ENCODE measurements at regions of chr2 and their contacts with region 1.

Region 1: GRCh38 chr2:55050133-55050994 is at the start of gene RTN4:
- DNase-seq: peak; percentile 99
- H3K4me3 Mint-ChIP-seq: peak within 1 kb of the TSS; percentile 98
- H3K27ac Mint-ChIP-seq: peak within 1 kb of the TSS; percentile 98
- H3K4me1 Mint-ChIP-seq: peaks cover 69% of the 10 kb centered on the region
- H3K27me3 Mint-ChIP-seq: no peaks in the 10 kb centered on the region
- total RNA-seq, gene RTN4: 81.2 and 83.0 TPM in 2 replicates

Region 2: DNA sequence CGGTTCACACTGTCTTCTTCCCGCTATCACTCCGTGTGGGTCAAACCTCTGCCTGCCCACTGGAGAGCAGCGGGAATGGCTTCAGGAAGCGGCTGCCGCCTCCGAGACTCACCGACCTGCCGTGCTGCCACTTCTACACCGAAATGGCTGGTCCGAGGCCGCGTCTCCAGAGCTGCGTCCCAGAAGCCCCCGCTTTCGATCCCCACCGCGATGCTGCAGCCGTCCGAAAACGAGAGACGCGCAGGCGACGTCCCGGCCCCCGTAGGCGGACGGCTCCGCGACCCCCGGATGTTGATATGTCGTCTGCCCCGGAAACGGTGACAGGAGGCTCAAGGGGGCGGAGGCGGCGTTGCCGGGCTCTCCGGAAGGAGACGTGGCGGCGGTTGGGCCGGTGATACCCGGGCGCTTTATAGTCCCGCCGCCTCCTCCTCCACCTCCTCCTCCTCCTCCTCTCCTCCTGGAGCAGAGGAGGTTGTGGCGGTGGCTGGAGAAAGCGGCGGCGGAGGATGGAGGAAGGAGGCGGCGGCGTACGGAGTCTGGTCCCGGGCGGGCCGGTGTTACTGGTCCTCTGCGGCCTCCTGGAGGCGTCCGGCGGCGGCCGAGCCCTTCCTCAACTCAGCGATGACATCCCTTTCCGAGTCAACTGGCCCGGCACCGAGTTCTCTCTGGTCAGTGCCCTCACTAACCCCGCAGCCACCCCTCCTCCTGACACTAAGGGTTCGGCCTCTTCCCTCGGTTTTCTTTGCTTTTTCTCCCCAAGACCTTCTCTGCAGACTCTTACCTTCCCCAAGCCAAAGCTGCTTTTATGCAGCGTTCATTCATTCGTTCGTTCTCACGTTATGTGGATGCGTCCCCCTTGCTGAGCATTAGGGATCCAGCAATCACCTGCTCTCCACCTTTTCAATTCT is 1263.4 kb before region 1 on chr2 and contains the starts of genes ASB3 and ERLEC1:
- intact Hi-C with region 1: loop called (anchors 1 kb)
- DNase-seq: peak; percentile 87
- H3K4me3 Mint-ChIP-seq: peak within 1 kb of the TSS; percentile 99
- H3K27ac Mint-ChIP-seq: peak within 1 kb of the TSS; percentile 98
- H3K4me1 Mint-ChIP-seq: peaks cover 47% of the 10 kb centered on the region
- H3K27me3 Mint-ChIP-seq: no peaks in the 10 kb centered on the region
- total RNA-seq, gene ASB3: 18.6 and 21.5 TPM in 2 replicates
- total RNA-seq, gene ERLEC1: 28.4 and 29.6 TPM in 2 replicates

Region 3: GRCh38 chr2:54680397-54681041 is 369.8 kb before region 1 on chr2:
- intact Hi-C with region 1: loop called (anchors 1 kb)
- DNase-seq: peak; percentile 39
- H3K4me3 Mint-ChIP-seq: peak overlapping the region; percentile 78
- H3K27ac Mint-ChIP-seq: peak overlapping the region; percentile 65
- H3K4me1 Mint-ChIP-seq: peaks cover 59% of the 10 kb centered on the region
- H3K27me3 Mint-ChIP-seq: peaks cover 33% of the 10 kb centered on the region

Region 4: DNA sequence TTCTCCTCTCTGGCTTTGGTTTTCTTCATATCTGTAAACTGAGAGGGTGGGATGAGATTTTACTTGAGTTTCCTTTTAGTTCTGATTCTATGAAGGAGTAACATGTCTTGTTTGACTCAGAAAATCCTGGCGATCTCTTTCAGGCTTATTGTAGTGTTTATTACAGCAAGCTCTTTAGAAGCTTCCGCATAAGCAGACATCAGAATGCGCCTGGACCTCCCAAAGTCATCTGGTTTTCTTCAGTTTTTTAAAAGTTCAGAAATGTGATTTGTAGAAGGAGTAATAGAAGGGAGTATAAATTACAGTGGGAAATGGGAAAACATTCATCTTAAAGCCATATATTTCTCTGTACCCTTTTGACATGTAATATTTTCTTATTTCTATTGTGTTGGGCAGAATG is 258.5 kb before region 1 on chr2:
- intact Hi-C with region 1: no loop called
- DNase-seq: no peak
- H3K4me3 Mint-ChIP-seq: no peak overlapping the region
- H3K27ac Mint-ChIP-seq: no peak overlapping the region
- H3K4me1 Mint-ChIP-seq: no peaks in the 10 kb centered on the region
- H3K27me3 Mint-ChIP-seq: peaks cover 3% of the 10 kb centered on the region

Region 5: DNA sequence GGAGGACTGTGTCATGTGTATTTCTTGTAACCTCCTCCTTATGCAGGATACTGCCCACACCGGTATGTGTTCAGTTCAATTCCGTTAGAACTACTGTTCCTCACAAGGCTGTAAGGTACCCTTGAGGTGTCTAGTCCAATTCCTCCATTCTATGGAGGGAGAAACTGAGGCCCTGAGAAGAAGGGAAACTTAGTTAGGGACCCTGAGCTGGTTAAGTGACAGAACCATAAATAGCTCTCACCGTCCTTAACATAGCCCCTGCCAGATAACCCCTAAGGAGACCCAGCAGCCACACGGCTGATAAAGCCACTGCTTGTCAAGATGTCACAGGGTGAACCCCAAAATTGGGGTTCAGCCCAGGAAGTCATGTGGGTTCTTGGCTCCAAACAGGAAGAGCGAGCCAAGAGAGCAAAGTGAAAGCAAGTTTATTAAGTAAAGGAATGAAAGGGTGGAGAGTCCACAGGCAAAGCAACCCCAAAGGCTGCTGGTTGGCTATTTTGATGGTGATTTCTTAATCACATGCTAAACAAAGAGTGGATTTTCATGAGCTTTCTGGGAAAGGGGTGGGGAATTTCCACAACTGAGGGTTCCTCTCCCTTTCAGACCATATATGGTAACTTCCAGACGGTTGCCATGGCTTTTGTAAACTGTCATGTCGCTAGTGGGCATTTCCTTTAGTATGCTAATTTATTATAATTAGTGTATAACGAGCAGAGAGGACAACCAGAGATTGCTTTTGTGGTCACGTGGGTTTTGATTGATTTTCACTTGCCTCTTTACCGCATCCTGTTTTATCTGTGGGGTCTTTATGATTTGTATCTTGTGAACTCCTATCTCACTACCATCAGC is 83.3 kb after region 1 on chr2:
- intact Hi-C with region 1: loop called (anchors 1 kb)
- DNase-seq: peak; percentile 58
- H3K4me3 Mint-ChIP-seq: peak overlapping the region; percentile 82
- H3K27ac Mint-ChIP-seq: peak overlapping the region; percentile 97
- H3K4me1 Mint-ChIP-seq: peaks cover 31% of the 10 kb centered on the region
- H3K27me3 Mint-ChIP-seq: no peaks in the 10 kb centered on the region

Region 6: GRCh38 chr2:55232084-55232862 is 181.9 kb after region 1 on chr2 and contains the starts of genes CLHC1 and RPS27A:
- intact Hi-C with region 1: loop called (anchors 1 kb)
- DNase-seq: peak; percentile 89
- H3K4me3 Mint-ChIP-seq: peak within 1 kb of the TSS; percentile 100
- H3K27ac Mint-ChIP-seq: peak within 1 kb of the TSS; percentile 97
- H3K4me1 Mint-ChIP-seq: peaks cover 63% of the 10 kb centered on the region
- H3K27me3 Mint-ChIP-seq: no peaks in the 10 kb centered on the region
- total RNA-seq, gene CLHC1: 9.0 and 12.3 TPM in 2 replicates
- total RNA-seq, gene RPS27A: 949 and 953 TPM in 2 replicates

Region 7: GRCh38 chr2:55419679-55420438 is 369.5 kb after region 1 on chr2 and contains the start of gene CCDC88A:
- intact Hi-C with region 1: loop called (anchors 1 kb)
- DNase-seq: peak; percentile 78
- H3K4me3 Mint-ChIP-seq: peak within 1 kb of the TSS; percentile 89
- H3K27ac Mint-ChIP-seq: peak within 1 kb of the TSS; percentile 50
- H3K4me1 Mint-ChIP-seq: peaks cover 23% of the 10 kb centered on the region
- H3K27me3 Mint-ChIP-seq: peaks cover 25% of the 10 kb centered on the region
- total RNA-seq, gene CCDC88A: 6.4 and 8.4 TPM in 2 replicates

Region 8: DNA sequence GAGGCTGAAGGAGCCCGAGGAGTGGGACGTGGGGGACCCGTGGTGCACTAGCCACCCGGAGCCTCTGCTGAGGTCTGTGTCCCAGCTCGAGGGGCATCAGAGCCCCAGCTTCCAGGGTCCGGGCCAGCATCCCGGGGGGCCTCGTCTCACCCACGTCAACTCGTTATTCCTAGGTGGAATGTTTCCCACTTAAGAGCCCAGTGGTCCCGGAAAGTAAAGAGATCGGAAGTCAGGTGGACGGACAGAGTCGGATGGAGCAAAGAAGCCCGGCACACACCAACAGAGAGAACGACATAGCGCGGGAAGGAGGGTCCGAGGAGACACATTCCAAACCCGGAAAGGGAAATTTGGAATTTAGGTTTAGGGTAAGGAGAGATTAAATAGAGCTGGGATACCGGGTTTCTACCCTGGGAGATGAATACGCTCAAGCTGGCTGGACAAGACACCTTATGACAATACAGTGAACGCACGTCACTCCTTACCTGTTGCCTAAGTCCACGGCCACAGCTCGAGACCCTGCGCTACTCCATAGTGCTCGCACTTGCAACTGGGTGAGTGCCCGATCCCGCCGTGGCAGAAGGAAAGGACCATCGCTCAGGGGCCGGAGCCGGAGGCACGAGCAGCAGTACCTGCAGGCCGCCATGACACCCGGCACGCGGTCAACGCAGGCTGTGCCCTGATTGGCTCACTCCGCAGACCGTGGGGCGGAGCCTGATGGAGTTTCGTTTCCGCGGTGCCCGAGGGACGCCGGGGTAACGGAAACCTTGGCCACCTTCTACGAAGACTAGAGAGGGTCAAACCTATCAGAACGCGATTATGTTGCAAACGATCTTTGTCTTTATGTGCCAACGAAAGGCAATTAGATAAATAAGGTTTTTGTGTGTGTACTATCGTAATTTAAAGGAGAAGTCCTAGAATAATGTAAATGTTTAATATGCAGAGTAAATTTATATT is 643.1 kb after region 1 on chr2 and contains the start of gene PNPT1:
- intact Hi-C with region 1: loop called (anchors 5 kb)
- DNase-seq: peak; percentile 92
- H3K4me3 Mint-ChIP-seq: peak within 1 kb of the TSS; percentile 98
- H3K27ac Mint-ChIP-seq: peak within 1 kb of the TSS; percentile 89
- H3K4me1 Mint-ChIP-seq: peaks cover 39% of the 10 kb centered on the region
- H3K27me3 Mint-ChIP-seq: peaks cover 2% of the 10 kb centered on the region
- total RNA-seq, gene PNPT1: 65.1 and 71.1 TPM in 2 replicates

Measured in activated T-helper 1 cell treated with anti-CD3 and anti-CD28 coated beads, Interleukin-12 subunit alpha, Interleukin-12 subunit beta, Interleukin-2, Interleukin-4 antibody, amounts not matched to agents 30 ng/mL and 10 ng/mL and 1 ng/mL, durations not matched to agents 14 hours and 24 hours and 36 hours (primary cell).